ENCODE measurements at regions of chr12 and their contacts with region 1.

Region 1: DNA sequence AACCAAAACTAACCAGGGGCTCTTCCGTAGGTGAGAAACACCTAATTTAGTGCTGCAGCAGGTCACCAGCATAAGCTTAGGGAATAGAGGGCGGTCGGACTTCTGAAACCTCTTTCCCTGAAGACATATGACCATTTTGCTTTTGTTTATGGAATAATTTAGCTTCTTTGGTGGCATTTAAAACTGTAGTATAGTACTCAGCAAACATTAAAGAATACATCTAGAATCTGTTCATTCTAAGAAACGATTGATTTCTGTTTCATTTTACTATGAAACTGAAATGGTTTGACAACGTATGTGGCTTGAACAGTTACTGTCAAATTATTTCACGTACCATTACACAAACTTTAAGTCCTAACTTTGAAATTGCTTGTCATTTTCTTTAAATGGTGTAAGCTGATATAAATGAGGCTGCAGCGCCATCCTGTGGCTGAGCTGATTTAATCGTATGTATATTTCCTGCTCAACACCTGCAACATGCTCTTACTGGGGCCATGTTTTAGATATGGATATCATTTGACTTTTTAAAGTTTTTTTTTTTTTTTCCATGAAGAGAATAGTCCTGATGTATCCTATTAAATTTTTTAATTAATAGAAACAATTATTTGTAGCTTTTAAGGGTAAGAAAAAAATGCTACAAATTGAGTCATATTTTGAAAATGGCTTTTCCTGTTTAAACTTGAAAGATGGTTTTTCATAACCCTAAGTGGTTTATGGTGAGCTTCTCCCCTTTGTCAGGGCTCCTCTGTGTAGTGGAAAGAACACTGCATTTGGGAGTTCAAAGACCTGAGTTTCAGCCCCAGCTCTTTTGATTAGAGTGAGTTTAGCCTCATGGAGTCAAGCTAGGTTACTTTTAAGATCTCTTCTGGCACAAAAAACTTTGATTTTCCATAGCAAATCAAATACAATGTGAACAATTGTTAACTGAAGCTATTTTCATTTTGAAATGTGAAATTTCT is 27.4 kb downstream of the CFAP54 start:
- DNase-seq: peak; percentile 51 to 65
- H3K4me3 ChIP-seq: no peak overlapping the region
- H3K4me3 Mint-ChIP-seq: no peak overlapping the region
- H3K27ac Mint-ChIP-seq: no peak overlapping the region
- H3K4me1 ChIP-seq: no peaks in the 10 kb centered on the region
- H3K4me1 Mint-ChIP-seq: no peaks in the 10 kb centered on the region
- H3K27me3 ChIP-seq: no peaks in the 10 kb centered on the region
- H3K27me3 Mint-ChIP-seq: no peaks in the 10 kb centered on the region
- CTCF ChIP-seq: peak; percentile 31 to 60

Region 2: DNA sequence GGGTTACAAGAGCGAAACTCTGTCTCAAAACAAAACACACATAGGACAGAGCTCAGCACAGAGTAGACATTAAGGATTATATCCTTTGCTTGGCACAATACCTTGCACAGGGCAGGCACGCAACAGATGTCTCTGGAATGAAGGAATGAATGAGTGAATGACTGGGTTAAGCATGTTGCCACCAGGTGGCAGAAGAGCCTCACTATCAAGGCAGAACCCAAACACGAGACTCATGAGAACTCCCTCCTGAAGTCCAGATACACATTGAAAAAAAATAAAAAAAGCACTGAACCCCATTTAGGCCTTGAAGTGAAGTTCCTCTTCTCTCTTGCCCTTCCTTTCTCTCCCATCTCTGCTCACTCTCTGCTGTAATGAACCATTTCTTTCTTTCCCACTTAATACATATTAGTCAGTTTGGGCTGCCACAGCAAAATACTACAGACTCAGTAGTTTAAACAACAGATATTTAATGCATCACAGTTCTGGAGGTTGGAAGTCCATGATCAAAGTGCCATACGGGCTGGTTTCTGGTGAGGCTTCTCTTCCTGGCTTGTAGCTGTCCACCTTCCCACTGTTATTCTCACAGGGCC is 454.8 kb before region 1 on chr12:
- CTCF ChIA-PET with region 1: interaction called, 3 read pairs
- POLR2A ChIA-PET with region 1: no interaction called
- intact Hi-C with region 1: loop called (anchors 1 kb)
- DNase-seq: peak; percentile 74 to 76
- H3K4me3 ChIP-seq: no peak overlapping the region
- H3K4me3 Mint-ChIP-seq: no peak overlapping the region
- H3K27ac Mint-ChIP-seq: no peak overlapping the region
- H3K4me1 ChIP-seq: no peaks in the 10 kb centered on the region
- H3K4me1 Mint-ChIP-seq: no peaks in the 10 kb centered on the region
- H3K27me3 ChIP-seq: no peaks in the 10 kb centered on the region
- H3K27me3 Mint-ChIP-seq: no peaks in the 10 kb centered on the region
- CTCF ChIP-seq: peak; percentile 78 to 85

Region 3: DNA sequence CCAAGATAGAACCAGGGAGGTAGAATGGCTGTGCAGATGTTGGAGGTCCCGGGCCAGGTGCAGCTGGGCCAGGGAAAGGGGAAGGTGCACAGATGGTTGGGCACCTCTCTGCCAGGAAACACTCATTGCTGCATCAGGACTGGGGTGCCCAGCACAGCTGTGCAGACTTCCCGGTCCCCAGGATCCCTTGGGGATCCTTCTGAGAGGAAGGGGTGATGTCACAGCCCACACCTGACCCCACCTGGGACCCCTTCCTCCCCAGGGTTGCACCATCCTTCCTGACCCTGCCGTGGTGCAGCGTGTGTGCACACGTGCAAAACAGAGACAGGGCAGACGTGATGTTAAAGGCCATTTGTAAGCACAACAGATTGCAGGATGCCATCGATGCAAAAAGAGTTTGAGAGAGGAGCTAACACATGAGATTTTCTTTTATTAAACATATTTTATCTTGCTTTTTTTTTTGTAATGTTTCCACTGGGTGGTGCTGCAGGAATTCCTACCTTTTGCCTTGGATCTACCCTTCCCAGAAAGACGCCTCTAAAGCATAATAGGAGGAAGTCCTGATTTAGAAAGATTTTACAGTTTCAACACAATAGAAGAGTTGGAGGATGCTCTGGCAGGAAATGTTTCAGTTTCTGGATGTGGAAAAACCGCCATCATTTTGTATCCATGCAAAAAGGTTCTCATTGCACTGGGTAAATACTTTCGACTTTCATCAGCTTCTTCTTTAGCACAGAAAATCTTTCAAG is 307.8 kb before region 1 on chr12:
- CTCF ChIA-PET with region 1: interaction called, 4 read pairs
- POLR2A ChIA-PET with region 1: no interaction called
- intact Hi-C with region 1: loop called (anchors 1 kb)
- DNase-seq: no peak
- H3K4me3 ChIP-seq: no peak overlapping the region
- H3K4me3 Mint-ChIP-seq: no peak overlapping the region
- H3K27ac Mint-ChIP-seq: no peak overlapping the region
- H3K4me1 ChIP-seq: no peaks in the 10 kb centered on the region
- H3K4me1 Mint-ChIP-seq: no peaks in the 10 kb centered on the region
- H3K27me3 ChIP-seq: no peaks in the 10 kb centered on the region
- H3K27me3 Mint-ChIP-seq: peaks cover 11% of the 10 kb centered on the region
- CTCF ChIP-seq: no peak

Region 4: GRCh38 chr12:96399919-96400797 is 116.6 kb before region 1 on chr12 and contains the start of gene CDK17:
- CTCF ChIA-PET with region 1: interaction called, 6 read pairs
- POLR2A ChIA-PET with region 1: interaction called, 6 read pairs
- intact Hi-C with region 1: loop called (anchors 2 kb)
- DNase-seq: peak; percentile 80 to 83
- H3K4me3 ChIP-seq: peak within 1 kb of the TSS; percentile 69
- H3K4me3 Mint-ChIP-seq: peak within 1 kb of the TSS; percentile 96
- H3K27ac Mint-ChIP-seq: peak within 1 kb of the TSS; percentile 84
- H3K4me1 ChIP-seq: 0 out of 2 replicates have a peak, but pooled peaks cover 9% of the 10 kb centered on the region
- H3K4me1 Mint-ChIP-seq: peaks cover 18% of the 10 kb centered on the region
- H3K27me3 ChIP-seq: no peaks in the 10 kb centered on the region
- H3K27me3 Mint-ChIP-seq: no peaks in the 10 kb centered on the region
- CTCF ChIP-seq: peak in 1 of 2 experiments; percentile 37
- total RNA-seq, gene CDK17: 11.5 and 11.7 TPM in 2 replicates

Region 5: DNA sequence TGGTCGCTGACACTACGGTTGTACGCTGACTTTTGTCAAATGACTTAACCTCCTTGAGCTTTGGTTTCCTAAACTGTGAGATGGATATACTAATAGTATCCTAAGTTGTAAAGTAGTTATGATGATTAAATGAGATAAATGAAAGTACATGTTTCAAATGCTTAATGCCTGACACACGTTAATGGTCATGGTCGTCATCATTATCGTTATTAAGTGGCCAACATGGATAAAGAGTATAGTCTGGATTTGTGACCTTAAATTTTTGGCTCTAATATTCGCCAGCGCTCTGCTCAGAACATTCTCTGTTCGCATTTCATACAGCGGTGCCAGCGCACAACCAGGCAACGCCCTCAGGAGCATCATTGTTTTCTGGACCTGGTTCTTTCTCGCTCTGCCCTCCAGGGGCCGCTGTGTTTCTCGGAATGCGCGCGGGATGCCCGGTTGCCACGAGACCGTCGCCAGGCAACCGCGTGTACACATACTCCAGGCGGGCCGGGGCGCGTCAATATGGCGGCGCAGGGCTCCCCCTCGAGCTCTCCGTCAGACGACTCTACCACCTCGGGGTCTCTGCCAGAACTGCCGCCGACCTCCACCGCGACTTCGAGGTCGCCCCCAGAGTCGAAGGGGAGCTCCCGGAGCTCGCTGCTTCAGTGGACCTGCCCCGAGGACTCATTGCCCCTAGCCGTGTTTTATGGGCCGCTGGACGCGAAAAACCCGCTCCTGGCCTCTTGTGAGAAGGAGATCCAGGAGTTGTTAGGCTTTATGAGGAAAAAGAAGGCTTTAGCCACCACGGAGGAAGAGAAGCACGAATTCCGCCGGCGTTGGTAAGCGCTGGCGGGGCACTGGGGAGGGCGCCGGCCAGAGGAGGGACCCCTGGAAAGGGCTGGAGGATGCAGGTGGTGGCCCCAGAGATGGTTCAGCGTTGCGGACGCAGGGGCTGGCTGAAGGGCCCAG is 27.4 kb before region 1 on chr12 and contains the start of gene CFAP54:
- CTCF ChIA-PET with region 1: no interaction called
- POLR2A ChIA-PET with region 1: no interaction called
- intact Hi-C with region 1: loop called (anchors 1 kb)
- DNase-seq: peak; percentile 88 to 93
- H3K4me3 ChIP-seq: peak within 1 kb of the TSS; percentile 46
- H3K4me3 Mint-ChIP-seq: peak within 1 kb of the TSS; percentile 77
- H3K27ac Mint-ChIP-seq: peak within 1 kb of the TSS; percentile 95
- H3K4me1 ChIP-seq: 0 out of 2 replicates have a peak, but pooled peaks cover 3% of the 10 kb centered on the region
- H3K4me1 Mint-ChIP-seq: no peaks in the 10 kb centered on the region
- H3K27me3 ChIP-seq: no peaks in the 10 kb centered on the region
- H3K27me3 Mint-ChIP-seq: peaks cover 14% of the 10 kb centered on the region
- CTCF ChIP-seq: peak; percentile 84 to 90
- total RNA-seq, gene CFAP54: 0.12 and 0.14 TPM in 2 replicates

Region 6: GRCh38 chr12:96623656-96624217 is 107.0 kb after region 1 on chr12:
- CTCF ChIA-PET with region 1: no interaction called
- POLR2A ChIA-PET with region 1: no interaction called
- intact Hi-C with region 1: no loop called
- DNase-seq: no peak
- H3K4me3 ChIP-seq: no peak overlapping the region
- H3K4me3 Mint-ChIP-seq: no peak overlapping the region
- H3K27ac Mint-ChIP-seq: no peak overlapping the region
- H3K4me1 ChIP-seq: no peaks in the 10 kb centered on the region
- H3K4me1 Mint-ChIP-seq: no peaks in the 10 kb centered on the region
- H3K27me3 ChIP-seq: no peaks in the 10 kb centered on the region; the same call in 1 of the 2 replicates
- H3K27me3 Mint-ChIP-seq: peaks cover 5% of the 10 kb centered on the region
- CTCF ChIP-seq: no peak

Measured in Caco-2 (cell line).